AG04450 (cell line): ENCODE measurements at regions of chr15 and their contacts with region 1.

Region 1: DNA sequence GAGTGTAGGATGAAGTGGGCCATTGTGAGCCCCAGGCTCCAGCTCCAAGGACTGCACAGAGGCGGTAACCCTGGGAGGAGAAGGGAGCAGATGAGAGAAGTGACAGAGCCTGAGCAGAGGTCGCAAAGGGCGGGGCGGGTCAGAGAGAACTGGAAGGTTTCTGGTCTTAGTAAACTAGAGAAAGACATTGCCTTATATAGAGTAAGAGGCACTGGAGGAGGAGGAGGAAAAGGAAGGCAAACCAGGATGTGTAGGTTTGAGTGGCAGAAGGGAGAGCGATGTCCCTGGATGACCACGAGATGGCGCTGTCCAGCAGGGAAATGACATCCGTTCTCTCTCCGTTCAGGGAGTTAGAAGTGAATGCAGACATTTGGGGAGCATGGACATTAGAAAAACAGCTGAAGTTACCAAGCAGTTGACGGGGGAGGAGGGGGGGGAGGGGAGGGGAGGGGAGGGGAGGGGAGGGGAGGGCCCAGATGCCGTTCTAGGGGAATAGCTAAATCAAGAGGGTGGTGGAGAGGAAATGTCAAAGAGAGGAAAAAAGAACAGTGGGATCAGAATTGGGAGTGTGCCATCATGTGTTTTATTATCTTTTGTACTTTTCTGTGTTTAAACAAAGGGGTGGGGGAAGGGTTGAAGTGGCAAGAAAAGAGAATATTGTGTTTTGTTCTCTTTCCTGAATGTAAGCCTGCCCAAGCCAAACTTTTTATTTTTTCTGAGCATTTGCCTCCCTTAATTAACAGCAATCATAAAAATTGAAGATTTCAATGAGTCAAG is 48.8 kb downstream of the STARD5 start:
- DNase-seq: peak; percentile 75
- H3K4me3 ChIP-seq: no peak overlapping the region
- H3K27ac ChIP-seq: no peak overlapping the region
- H3K27me3 ChIP-seq: no peaks in the 10 kb centered on the region
- CTCF ChIP-seq: peak; percentile 93

Region 2: GRCh38 chr15:81291916-81292522 is 16.9 kb after region 1 on chr15:
- CTCF ChIA-PET with region 1: interaction called, 13 read pairs
- POLR2A ChIA-PET with region 1: interaction called, 4 read pairs
- DNase-seq: no peak
- H3K4me3 ChIP-seq: no peak overlapping the region
- H3K27ac ChIP-seq: no peak overlapping the region
- H3K27me3 ChIP-seq: no peaks in the 10 kb centered on the region
- CTCF ChIP-seq: no peak

Region 3: DNA sequence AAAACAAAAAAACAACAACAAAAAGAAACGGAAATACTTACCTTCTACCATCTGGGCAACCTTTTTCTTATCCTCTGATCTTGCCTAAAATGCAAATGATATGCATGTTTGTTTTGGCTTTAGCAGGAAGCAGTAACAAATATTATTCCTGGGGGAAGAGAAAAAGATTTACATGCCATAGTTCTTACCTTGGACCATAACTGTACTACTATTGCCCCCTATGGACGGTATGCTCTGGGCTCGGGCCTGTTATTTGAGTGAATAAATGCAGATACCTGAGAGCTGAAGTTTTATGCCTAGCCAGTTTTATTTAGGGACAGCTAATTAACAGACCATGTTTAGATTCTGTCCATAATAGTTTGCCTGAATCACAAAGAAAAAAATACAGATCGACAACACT is 61.4 kb after region 1 on chr15:
- CTCF ChIA-PET with region 1: interaction called, 20 read pairs
- POLR2A ChIA-PET with region 1: no interaction called
- DNase-seq: no peak
- H3K4me3 ChIP-seq: no peak overlapping the region
- H3K27ac ChIP-seq: no peak overlapping the region
- H3K27me3 ChIP-seq: no peaks in the 10 kb centered on the region
- CTCF ChIP-seq: peak; percentile 55

Region 4: DNA sequence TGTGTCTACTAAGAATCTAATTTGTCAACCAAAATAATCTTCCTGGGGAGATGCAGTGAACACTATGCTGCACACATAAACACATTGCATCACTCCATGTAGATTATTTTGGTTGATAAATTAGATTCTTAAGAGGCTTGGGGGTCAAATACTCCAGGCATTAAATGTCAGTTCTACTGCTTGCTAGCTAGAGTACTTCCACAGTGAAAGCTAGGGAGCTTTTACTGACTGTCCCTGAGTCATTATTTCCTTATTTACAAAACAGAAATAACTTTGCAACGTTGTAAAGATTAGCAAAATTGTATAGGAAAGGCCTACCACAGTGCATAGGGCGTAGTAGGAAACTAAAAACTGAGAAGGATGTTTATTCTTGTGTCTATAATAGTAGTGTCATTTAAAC is 111.8 kb after region 1 on chr15:
- CTCF ChIA-PET with region 1: interaction called, 14 read pairs
- POLR2A ChIA-PET with region 1: no interaction called
- DNase-seq: no peak
- H3K4me3 ChIP-seq: no peak overlapping the region
- H3K27ac ChIP-seq: no peak overlapping the region
- H3K27me3 ChIP-seq: no peaks in the 10 kb centered on the region
- CTCF ChIP-seq: no peak

Region 5: GRCh38 chr15:81400640-81401236 is 125.6 kb after region 1 on chr15:
- CTCF ChIA-PET with region 1: interaction called, 163 read pairs
- POLR2A ChIA-PET with region 1: no interaction called
- DNase-seq: peak; percentile 27
- H3K4me3 ChIP-seq: no peak overlapping the region
- H3K27ac ChIP-seq: no peak overlapping the region
- H3K27me3 ChIP-seq: peaks cover 2% of the 10 kb centered on the region
- CTCF ChIP-seq: peak; percentile 86